ENCODE measurements at regions of chr10 and their contacts with region 1.

Region 1: GRCh38 chr10:119608316-119609155 is 11.8 kb upstream of the TIAL1 start:
- DNase-seq: peak; percentile 65
- ATAC-seq: peak; percentile 96
- H3K4me3 Mint-ChIP-seq: no peak overlapping the region
- H3K27ac Mint-ChIP-seq: no peak overlapping the region
- H3K4me1 Mint-ChIP-seq: no peaks in the 10 kb centered on the region; the same call in 1 of the 2 replicates
- H3K27me3 Mint-ChIP-seq: peaks cover 4% of the 10 kb centered on the region; the same call in 1 of the 2 replicates
- CTCF ChIP-seq: no peak

Region 2: GRCh38 chr10:119575506-119575905 is 33.0 kb before region 1 on chr10:
- CTCF ChIA-PET with region 1: no interaction called
- POLR2A ChIA-PET with region 1: no interaction called
- DNase-seq: no peak
- ATAC-seq: 0 out of 2 replicates have a peak, but pooled peaks have one; percentile 22
- H3K4me3 Mint-ChIP-seq: no peak overlapping the region
- H3K27ac Mint-ChIP-seq: no peak overlapping the region
- H3K4me1 Mint-ChIP-seq: no peaks in the 10 kb centered on the region
- H3K27me3 Mint-ChIP-seq: no peaks in the 10 kb centered on the region
- CTCF ChIP-seq: no peak

Region 3: GRCh38 chr10:119596537-119597404 is 11.8 kb before region 1 on chr10 and contains the start of gene TIAL1:
- CTCF ChIA-PET with region 1: interaction called, 12 read pairs
- POLR2A ChIA-PET with region 1: no interaction called
- DNase-seq: peak; percentile 97
- ATAC-seq: peak; percentile 93
- H3K4me3 Mint-ChIP-seq: peak within 1 kb of the TSS; percentile 90
- H3K27ac Mint-ChIP-seq: peak within 1 kb of the TSS; percentile 95
- H3K4me1 Mint-ChIP-seq: peaks cover 37% of the 10 kb centered on the region
- H3K27me3 Mint-ChIP-seq: peaks cover 3% of the 10 kb centered on the region; the same call in 1 of the 2 replicates
- CTCF ChIP-seq: no peak
- total RNA-seq, gene TIAL1: 170 to 178 TPM (median 176 TPM) in 3 replicates

Region 4: DNA sequence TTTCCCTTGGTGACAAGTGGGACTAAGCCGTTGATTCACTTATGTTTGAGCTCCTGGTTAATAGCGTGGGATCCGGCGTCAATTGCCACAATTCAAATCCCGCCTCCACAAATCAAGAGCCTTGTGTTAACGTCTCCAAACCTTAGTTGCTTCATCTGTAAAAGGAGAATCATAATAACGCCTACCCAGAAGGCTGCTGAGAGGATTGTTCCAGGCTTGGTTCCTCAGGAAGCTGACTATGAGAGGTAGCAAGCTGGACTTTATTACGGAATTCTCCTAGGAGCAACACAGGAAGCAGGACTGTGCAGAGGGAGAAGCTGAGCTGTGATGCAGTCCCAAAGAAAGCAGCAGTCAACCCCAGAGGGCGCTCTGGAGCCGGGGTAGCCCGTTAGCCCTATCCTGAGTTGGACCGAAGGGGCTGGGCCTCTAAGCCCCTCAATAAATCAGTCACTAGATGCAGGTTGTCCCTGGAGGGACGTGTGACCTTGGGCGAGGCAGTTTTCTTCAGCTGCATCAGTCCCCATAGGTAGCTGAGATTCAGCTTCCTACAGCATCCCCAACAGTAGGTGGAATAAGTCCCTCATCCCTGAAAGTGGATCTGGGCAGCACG is 35.8 kb after region 1 on chr10:
- CTCF ChIA-PET with region 1: interaction called, 11 read pairs
- POLR2A ChIA-PET with region 1: no interaction called
- DNase-seq: peak; percentile 78
- ATAC-seq: peak; percentile 99
- H3K4me3 Mint-ChIP-seq: no peak overlapping the region
- H3K27ac Mint-ChIP-seq: no peak overlapping the region
- H3K4me1 Mint-ChIP-seq: peaks cover 7% of the 10 kb centered on the region; the same call in 1 of the 2 replicates
- H3K27me3 Mint-ChIP-seq: no peaks in the 10 kb centered on the region; the same call in 1 of the 2 replicates
- CTCF ChIP-seq: peak; percentile 29; the same call in 1 of the 2 replicates

Region 5: DNA sequence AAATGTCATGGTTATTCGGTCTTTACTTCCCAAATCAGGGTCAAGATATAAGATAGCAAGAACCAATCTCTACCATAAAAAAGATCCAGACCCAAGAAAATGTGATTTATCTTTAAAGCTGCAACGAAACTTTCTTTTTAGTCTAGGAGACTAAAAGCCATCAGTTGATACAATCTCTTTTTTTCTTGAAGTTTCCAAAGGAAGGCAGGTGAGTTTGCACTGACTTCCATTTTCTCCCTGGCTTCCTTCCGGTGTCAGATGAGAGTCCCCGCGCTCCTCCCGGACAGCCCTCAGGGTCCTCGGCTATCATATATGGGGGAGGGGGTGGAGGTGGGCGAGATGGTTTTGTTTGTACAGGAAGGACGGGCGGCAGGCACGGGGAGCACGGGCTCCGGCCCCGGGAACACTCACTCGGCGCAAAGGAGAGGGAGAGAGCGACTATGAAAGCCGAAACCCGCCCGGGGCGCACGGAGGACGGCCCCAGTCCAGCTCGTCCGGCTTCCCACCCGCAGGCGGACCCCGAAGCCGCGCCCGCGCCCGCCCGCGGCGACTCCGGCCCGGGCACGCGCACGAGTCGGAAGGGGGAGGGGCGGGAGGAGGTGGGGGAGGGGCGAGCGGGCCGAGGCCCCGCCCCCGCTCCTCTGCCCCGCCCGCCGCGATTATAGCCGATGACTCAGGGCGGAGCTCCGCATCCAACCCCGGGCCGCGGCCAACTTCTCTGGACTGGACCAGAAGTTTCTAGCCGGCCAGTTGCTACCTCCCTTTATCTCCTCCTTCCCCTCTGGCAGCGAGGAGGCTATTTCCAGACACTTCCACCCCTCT is 42.4 kb after region 1 on chr10 and contains the start of gene BAG3:
- CTCF ChIA-PET with region 1: interaction called, 10 read pairs
- POLR2A ChIA-PET with region 1: interaction called, 3 read pairs
- DNase-seq: peak; percentile 87
- ATAC-seq: peak; percentile 89
- H3K4me3 Mint-ChIP-seq: peak within 1 kb of the TSS; percentile 88
- H3K27ac Mint-ChIP-seq: peak within 1 kb of the TSS; percentile 31
- H3K4me1 Mint-ChIP-seq: peaks cover 40% of the 10 kb centered on the region
- H3K27me3 Mint-ChIP-seq: no peaks in the 10 kb centered on the region; the same call in 1 of the 2 replicates
- CTCF ChIP-seq: no peak
- total RNA-seq, gene BAG3: 15.7 to 16.8 TPM (median 15.9 TPM) in 3 replicates

Region 6: DNA sequence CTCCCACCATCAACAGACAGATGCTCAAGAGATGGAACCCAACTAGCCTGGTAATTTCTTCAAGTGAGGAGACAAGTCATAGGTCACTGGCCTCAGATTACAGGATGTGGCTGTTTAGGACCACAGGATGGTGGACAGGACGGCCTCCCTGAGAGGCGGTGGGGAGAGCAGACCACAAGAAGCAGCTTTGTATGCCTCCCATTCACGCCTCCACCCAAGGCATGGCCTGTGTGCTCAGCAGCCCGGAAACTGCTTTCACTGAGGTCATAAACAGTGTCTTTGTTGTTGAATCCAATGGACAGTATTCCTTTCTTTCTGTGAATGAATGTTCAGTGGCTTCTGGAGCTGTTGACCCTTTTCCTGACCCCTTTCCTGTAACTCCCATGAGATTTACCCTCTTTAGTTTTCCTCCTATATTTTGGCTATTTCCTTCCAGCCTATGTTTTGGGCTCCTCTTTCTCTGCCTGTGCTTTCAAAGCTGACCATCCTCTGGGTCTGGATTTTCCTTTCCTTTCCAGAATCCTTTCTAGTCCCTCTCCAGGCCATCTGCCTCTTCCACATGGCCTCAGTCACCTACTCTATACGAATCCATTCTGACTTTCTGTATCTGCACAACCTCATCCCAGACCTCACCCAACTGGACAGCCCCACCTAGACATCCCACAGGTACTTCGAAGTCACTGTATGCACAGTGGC is 84.9 kb after region 1 on chr10:
- CTCF ChIA-PET with region 1: no interaction called
- POLR2A ChIA-PET with region 1: no interaction called
- DNase-seq: no peak
- ATAC-seq: no peak
- H3K4me3 Mint-ChIP-seq: no peak overlapping the region
- H3K27ac Mint-ChIP-seq: no peak overlapping the region; the same call in 1 of the 2 replicates
- H3K4me1 Mint-ChIP-seq: peaks cover 19% of the 10 kb centered on the region
- H3K27me3 Mint-ChIP-seq: no peaks in the 10 kb centered on the region
- CTCF ChIP-seq: no peak

Region 7: GRCh38 chr10:119725828-119726675 is 117.5 kb after region 1 on chr10 and contains the start of gene INPP5F:
- CTCF ChIA-PET with region 1: interaction called, 16 read pairs
- POLR2A ChIA-PET with region 1: no interaction called
- DNase-seq: peak; percentile 99
- ATAC-seq: peak; percentile 96
- H3K4me3 Mint-ChIP-seq: peak within 1 kb of the TSS; percentile 82
- H3K27ac Mint-ChIP-seq: peak within 1 kb of the TSS; percentile 75
- H3K4me1 Mint-ChIP-seq: peaks cover 30% of the 10 kb centered on the region
- H3K27me3 Mint-ChIP-seq: no peaks in the 10 kb centered on the region
- CTCF ChIP-seq: no peak
- total RNA-seq, gene INPP5F: 79.3 to 83.3 TPM (median 80.6 TPM) in 3 replicates

Region 8: DNA sequence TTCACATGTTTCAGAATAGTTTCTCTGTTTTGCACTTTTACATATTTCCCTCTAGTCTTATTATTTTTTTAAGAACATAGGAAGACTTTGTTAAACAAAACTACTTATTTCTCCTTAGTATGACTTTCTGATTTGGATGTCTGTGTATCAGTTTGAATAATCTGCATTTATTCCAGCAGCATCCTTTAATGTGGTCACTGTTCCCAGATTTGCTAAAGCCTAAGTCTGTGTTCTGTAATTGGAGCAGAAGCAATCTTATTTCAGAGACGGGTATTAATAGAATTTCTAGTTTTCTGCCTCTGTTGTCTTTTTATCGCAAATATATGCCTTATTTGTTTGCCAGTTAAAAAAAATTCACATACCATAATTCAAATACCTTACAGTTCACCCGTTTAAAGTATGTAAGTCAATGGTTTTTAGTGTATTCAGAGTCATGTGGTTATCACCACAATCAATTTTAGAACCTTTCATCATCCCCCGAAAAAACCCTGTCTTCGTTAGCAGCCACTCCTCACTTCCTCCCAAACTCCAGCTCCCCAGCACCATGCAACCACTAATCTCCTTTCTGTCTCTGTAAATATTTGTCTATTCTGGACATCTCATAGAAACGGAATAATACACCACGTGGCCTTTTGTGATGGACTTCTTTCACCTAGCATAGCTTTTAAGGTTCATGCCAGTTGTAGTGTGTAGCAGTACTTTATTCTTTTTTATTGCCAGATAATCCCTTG is 176.0 kb after region 1 on chr10:
- CTCF ChIA-PET with region 1: no interaction called
- POLR2A ChIA-PET with region 1: no interaction called
- DNase-seq: no peak
- ATAC-seq: no peak
- H3K4me3 Mint-ChIP-seq: no peak overlapping the region
- H3K27ac Mint-ChIP-seq: peak overlapping the region; percentile 18
- H3K4me1 Mint-ChIP-seq: peaks cover 39% of the 10 kb centered on the region
- H3K27me3 Mint-ChIP-seq: no peaks in the 10 kb centered on the region
- CTCF ChIP-seq: no peak

Region 9: DNA sequence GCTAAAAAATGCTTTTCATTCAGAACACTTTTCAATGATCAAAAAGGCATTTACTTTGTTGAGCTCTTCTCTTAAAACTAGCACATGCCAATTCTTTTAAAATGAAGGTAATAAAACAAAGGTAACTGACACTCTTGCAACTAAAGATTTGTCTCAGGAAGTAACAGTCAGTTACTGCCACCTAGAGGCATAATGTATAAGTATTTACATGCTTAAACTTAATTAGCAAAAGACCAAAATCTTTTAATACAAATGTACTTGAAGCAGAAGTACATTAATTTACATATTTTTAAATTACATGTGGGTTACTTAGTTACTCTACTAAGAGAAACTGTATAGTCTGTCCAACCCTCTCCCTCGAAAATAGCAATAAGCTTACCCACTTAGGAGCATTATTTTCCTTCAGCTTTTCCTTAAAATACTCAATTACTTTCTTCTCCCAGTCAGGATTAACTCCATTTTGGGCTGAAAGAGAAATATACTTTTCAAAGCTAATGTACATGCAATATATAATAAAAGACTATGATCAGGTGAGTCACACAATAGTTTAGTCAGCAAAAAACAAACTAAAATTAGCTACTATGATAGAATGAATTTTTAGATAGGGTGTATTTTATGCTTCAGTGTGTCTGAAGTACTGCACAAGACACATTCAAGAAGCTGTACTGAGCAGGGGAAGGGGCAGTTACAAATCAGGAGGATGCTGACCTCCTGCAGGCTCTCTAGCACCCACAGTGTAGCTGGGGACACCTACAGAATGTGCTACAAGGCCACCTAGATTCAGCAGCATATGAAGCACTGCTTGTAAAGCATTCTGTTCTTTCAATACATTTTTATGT is 251.1 kb after region 1 on chr10:
- CTCF ChIA-PET with region 1: interaction called, 10 read pairs
- POLR2A ChIA-PET with region 1: no interaction called
- DNase-seq: no peak
- ATAC-seq: no peak
- H3K4me3 Mint-ChIP-seq: no peak overlapping the region
- H3K27ac Mint-ChIP-seq: peak overlapping the region; percentile 61
- H3K4me1 Mint-ChIP-seq: peaks cover 27% of the 10 kb centered on the region
- H3K27me3 Mint-ChIP-seq: no peaks in the 10 kb centered on the region
- CTCF ChIP-seq: 0 out of 2 replicates have a peak, but pooled peaks have one; percentile 34

Measured in WTC11 (cell line).